Activated B cell treated with CpG ODN at 0.5 μM for 24 hours (primary cell): ENCODE measurements at regions of chr7 and their contacts with region 1.

Region 1: GRCh38 chr7:130069978-130070860 is at the start of gene KLHDC10:
- DNase-seq: peak; percentile 83
- ATAC-seq: peak; percentile 92
- H3K4me3 Mint-ChIP-seq: peak within 1 kb of the TSS; percentile 93
- H3K27ac Mint-ChIP-seq: peak within 1 kb of the TSS; percentile 90
- H3K4me1 Mint-ChIP-seq: peaks cover 44% of the 10 kb centered on the region
- H3K27me3 Mint-ChIP-seq: no peaks in the 10 kb centered on the region
- CTCF ChIP-seq: no peak
- total RNA-seq, gene KLHDC10: 17.2 and 21.0 TPM in 2 replicates

Region 2: DNA sequence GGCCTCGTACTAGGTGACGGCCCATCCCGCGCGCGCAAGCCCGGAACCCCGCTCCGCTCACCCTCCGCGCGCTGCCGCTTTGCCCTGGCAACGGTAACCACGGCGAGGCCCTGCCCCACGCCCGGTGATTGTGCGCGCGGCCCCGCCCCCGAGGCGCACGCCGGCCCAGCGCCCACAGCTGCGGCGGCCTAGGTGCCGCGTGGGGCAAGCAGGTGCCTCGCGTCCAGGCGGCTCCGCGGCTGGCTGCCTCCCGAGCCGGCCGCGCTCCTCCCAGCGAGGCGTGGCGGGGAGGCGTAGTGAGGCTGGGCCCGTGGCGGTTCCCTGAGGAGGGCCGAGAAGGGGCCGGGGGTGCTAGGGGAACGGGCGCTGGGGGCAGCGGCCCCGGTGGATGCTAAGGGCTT is 567.8 kb before region 1 on chr7 and contains the start of gene SMKR1:
- CTCF ChIA-PET with region 1: no interaction called
- POLR2A ChIA-PET with region 1: interaction called, 3 read pairs
- intact Hi-C with region 1: loop called (anchors 1 kb)
- DNase-seq: peak; percentile 97
- ATAC-seq: peak; percentile 93
- H3K4me3 Mint-ChIP-seq: peak within 1 kb of the TSS; percentile 83
- H3K27ac Mint-ChIP-seq: peak within 1 kb of the TSS; percentile 78
- H3K4me1 Mint-ChIP-seq: peaks cover 30% of the 10 kb centered on the region
- H3K27me3 Mint-ChIP-seq: no peaks in the 10 kb centered on the region
- CTCF ChIP-seq: no peak
- total RNA-seq, gene SMKR1: 2.2 and 2.4 TPM in 2 replicates

Region 3: GRCh38 chr7:130084037-130084875 is 14.0 kb after region 1 on chr7:
- CTCF ChIA-PET with region 1: interaction called, 12 read pairs
- POLR2A ChIA-PET with region 1: interaction called, 4 read pairs
- intact Hi-C with region 1: no loop called
- DNase-seq: no peak
- ATAC-seq: no peak
- H3K4me3 Mint-ChIP-seq: no peak overlapping the region
- H3K27ac Mint-ChIP-seq: no peak overlapping the region
- H3K4me1 Mint-ChIP-seq: peaks cover 20% of the 10 kb centered on the region
- H3K27me3 Mint-ChIP-seq: no peaks in the 10 kb centered on the region
- CTCF ChIP-seq: no peak

Region 4: DNA sequence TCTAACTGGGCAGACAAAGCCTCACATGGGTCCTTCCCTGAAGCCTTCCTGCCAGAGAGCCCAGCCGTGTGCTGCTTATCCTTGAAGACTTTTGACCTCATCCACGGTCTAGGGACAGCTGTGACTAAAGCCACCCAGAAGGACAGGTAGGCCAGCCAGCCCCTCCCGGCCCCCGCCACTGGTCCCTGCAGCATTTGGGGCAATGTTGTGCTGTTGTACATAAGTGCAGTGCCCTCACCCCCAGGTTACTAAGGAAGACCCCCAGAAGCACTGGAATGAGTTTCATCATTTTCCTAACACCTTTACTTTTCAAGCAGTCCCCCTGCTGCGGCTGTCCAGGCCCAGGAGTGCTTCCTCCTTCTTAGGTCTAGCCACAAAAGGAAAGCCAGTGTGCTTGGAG is 92.0 kb after region 1 on chr7:
- CTCF ChIA-PET with region 1: no interaction called
- POLR2A ChIA-PET with region 1: no interaction called
- intact Hi-C with region 1: no loop called
- DNase-seq: no peak
- ATAC-seq: no peak
- H3K4me3 Mint-ChIP-seq: no peak overlapping the region
- H3K27ac Mint-ChIP-seq: no peak overlapping the region
- H3K4me1 Mint-ChIP-seq: no peaks in the 10 kb centered on the region
- H3K27me3 Mint-ChIP-seq: no peaks in the 10 kb centered on the region
- CTCF ChIP-seq: no peak

Region 5: DNA sequence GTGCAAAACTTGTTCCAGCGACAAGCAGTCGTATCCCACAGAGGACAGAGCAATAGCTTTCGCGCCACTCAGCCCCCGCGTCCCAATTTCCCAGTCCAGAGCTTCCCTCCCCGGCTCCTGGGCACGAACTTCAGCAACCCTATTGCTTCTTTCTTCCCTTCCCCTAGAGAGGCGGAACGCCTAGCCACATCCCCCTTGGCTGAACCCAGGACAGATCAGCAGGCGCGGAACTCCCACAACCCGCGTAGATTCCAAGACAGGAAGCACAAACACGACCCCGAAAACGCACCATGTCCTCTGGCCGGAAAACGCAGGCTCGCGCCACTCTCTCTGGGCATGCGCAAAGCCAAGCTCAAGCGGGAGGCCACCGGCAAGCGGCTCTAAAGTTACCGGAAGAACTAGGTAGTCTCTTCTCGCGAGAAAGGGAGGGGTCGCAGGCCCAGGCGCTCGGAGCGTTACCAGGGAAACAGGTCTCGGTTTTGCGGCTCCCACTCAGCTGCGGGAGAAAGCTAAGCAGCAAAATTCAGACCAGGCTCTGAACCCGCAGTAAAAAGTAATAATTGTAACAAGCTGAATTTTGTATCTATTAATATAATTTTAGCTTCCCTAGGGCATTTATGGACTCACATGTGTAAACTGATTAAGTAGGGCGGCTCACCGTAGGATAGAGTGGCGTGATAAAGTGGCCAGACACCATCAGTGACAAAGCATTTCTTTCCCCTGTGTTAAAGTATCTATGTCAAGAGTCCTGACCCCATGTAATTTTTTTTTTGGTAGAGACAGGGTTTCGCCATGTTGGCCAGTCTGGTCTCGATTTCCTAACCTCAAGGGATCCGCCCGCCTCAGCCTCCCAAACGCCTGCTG is 135.1 kb after region 1 on chr7 and contains the start of gene TMEM209:
- CTCF ChIA-PET with region 1: interaction called, 4 read pairs
- POLR2A ChIA-PET with region 1: interaction called, 15 read pairs
- intact Hi-C with region 1: loop called (anchors 1 kb)
- DNase-seq: peak; percentile 83
- ATAC-seq: peak; percentile 98
- H3K4me3 Mint-ChIP-seq: peak within 1 kb of the TSS; percentile 100
- H3K27ac Mint-ChIP-seq: peak within 1 kb of the TSS; percentile 100
- H3K4me1 Mint-ChIP-seq: peaks cover 20% of the 10 kb centered on the region
- H3K27me3 Mint-ChIP-seq: peaks cover 3% of the 10 kb centered on the region
- CTCF ChIP-seq: no peak
- total RNA-seq, gene TMEM209: 30.0 and 32.6 TPM in 2 replicates

Region 6: GRCh38 chr7:130560970-130561369 is 490.8 kb after region 1 on chr7:
- CTCF ChIA-PET with region 1: no interaction called
- POLR2A ChIA-PET with region 1: no interaction called
- intact Hi-C with region 1: loop called (anchors 1 kb)
- DNase-seq: no peak
- ATAC-seq: peak; percentile 77
- H3K4me3 Mint-ChIP-seq: no peak overlapping the region
- H3K27ac Mint-ChIP-seq: no peak overlapping the region
- H3K4me1 Mint-ChIP-seq: peaks cover 4% of the 10 kb centered on the region
- H3K27me3 Mint-ChIP-seq: no peaks in the 10 kb centered on the region
- CTCF ChIP-seq: no peak

Region 7: DNA sequence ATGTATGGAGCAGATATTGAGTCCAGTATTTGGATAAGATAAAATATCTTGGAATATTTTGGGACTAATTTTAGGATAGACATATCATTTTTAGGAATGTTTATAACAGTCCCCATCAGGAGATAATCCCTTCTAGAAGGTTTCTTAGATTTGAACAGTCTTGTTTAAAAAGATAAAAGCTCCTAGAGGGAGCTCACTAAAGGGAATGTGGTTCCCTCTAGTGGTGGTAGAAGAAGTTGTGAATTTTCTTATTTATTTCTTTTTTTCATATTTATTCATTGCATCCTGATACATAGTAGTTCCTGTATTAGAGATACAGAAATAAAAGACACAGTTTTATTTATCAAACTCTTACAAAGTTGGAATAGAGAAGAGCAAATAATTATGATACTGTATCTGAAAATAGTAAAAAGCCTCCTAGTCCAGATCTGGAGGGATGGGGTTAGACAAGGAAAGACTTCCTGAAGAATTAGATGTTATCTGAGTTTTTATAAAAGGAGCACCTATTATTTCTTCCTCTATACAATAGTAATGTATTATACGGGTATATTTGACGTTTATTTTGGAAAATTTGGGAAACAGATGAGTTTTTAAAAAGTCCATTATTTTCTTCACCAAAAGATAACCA is 688.3 kb after region 1 on chr7:
- CTCF ChIA-PET with region 1: interaction called, 78 read pairs
- POLR2A ChIA-PET with region 1: interaction called, 3 read pairs
- intact Hi-C with region 1: loop called (anchors 1 kb)
- DNase-seq: no peak
- ATAC-seq: peak; percentile 40
- H3K4me3 Mint-ChIP-seq: no peak overlapping the region
- H3K27ac Mint-ChIP-seq: no peak overlapping the region
- H3K4me1 Mint-ChIP-seq: no peaks in the 10 kb centered on the region
- H3K27me3 Mint-ChIP-seq: peaks cover 3% of the 10 kb centered on the region
- CTCF ChIP-seq: peak; percentile 47